Natural killer cell (primary cell): ENCODE measurements at regions of chr11 and their contacts with region 1.

Region 1: DNA sequence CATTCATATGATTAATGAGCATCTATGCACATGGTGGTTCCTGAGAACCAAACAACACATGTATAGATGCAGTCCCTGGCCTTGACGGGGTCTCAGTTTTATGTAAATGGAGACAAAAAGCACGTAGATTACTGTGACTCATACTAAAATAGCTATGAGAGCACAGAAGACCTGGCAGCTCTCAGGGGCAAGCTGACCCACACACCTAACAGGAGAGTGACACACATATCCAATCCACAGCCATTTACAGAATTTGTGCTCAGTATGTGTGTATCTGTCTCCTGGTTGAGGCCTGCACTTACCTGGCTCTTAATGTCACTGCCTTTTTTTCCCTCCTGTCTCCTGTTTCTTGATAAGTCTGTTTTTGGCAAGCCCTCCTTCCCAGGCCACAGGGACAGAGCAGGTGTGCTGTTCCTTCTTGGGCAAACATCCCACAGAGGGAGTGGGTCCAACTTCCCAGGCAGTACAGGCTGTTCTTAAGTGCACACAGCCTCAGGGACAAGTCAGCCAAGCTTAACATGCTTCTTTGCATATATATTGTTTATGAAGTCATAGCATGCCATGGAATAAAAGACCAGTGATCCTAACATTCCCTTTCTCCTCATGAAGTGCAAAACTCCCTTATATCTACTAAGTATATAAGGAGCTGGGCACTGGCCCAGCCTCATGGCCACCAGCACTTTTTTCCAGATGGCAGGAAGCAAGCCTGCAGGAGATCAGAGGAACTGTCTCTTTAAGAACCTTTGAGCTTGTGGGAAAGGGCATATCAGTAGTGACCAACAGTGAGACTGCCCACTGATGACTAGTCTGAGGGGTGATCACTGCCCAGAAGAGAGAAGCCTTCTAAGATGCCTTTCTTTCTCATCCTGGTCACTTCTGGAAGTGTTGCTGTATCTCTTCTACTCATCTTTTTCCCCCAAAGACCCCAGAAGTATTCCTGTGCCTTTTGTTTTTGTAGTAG is 124.7 kb upstream of the CCDC90B start:
- DNase-seq: no peak
- ATAC-seq: peak in 1 of 3 donors; percentile 24
- H3K4me3 ChIP-seq: no peak overlapping the region
- H3K4me3 Mint-ChIP-seq: no peak overlapping the region
- H3K27ac ChIP-seq: no peak overlapping the region
- H3K27ac Mint-ChIP-seq: no peak overlapping the region
- H3K4me1 ChIP-seq: no peaks in the 10 kb centered on the region
- H3K4me1 Mint-ChIP-seq: no peaks in the 10 kb centered on the region
- H3K27me3 ChIP-seq: no peaks in the 10 kb centered on the region
- H3K27me3 Mint-ChIP-seq: peaks cover 0 to 1% of the 10 kb centered on the region in 2 donors
- CTCF ChIP-seq: no peak

Region 2: DNA sequence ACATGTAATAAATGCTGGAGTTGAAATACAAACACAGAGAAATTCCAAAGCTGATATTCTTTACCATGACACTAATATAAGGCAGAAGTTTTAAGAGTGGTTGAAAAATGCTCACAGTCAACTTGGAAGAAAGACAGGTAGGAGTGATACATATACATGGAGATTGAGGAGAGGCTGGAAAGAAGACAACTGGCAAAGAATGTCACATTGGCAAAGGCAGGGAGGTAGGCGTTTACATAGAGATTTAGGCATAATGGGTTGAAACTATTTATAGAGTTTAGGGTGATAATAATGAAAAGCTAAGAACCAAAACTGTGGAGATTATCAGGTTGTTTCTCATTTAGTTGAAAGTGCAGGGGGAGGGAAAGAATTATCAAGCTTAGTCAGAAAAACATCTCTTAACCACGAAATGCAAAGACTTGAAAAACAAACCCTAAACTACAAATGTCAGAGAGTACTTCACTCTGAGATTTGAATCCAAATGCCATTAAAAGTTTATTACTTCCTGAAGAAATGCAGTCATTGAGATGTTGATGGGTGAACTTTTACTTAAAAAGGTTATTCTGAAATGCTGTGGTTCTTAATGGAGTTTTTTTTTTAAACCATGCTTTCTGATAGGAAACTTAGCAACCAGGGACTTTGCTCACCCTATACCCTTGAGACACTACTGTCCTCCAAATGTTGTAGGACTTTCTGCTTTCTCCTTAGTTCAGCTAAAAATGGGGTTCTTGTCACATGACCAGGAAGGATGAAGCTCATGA is 13.7 kb after region 1 on chr11:
- intact Hi-C with region 1: loop called (anchors 1 kb)
- DNase-seq: no peak
- ATAC-seq: no peak
- H3K4me3 ChIP-seq: no peak overlapping the region
- H3K4me3 Mint-ChIP-seq: no peak overlapping the region
- H3K27ac ChIP-seq: no peak overlapping the region
- H3K27ac Mint-ChIP-seq: no peak overlapping the region
- H3K4me1 ChIP-seq: no peaks in the 10 kb centered on the region
- H3K4me1 Mint-ChIP-seq: no peaks in the 10 kb centered on the region
- H3K27me3 ChIP-seq: no peaks in the 10 kb centered on the region
- H3K27me3 Mint-ChIP-seq: peaks cover 0 to 3% of the 10 kb centered on the region in 2 donors
- CTCF ChIP-seq: no peak